Cardiac septum (tissue), 1 donor: ENCODE measurements at regions of chr7 and their contacts with region 1.

Region 1: GRCh38 chr7:130365511-130366441 is 14.5 kb upstream of the CPA1 start:
- DNase-seq: peak; percentile 74

Region 2: DNA sequence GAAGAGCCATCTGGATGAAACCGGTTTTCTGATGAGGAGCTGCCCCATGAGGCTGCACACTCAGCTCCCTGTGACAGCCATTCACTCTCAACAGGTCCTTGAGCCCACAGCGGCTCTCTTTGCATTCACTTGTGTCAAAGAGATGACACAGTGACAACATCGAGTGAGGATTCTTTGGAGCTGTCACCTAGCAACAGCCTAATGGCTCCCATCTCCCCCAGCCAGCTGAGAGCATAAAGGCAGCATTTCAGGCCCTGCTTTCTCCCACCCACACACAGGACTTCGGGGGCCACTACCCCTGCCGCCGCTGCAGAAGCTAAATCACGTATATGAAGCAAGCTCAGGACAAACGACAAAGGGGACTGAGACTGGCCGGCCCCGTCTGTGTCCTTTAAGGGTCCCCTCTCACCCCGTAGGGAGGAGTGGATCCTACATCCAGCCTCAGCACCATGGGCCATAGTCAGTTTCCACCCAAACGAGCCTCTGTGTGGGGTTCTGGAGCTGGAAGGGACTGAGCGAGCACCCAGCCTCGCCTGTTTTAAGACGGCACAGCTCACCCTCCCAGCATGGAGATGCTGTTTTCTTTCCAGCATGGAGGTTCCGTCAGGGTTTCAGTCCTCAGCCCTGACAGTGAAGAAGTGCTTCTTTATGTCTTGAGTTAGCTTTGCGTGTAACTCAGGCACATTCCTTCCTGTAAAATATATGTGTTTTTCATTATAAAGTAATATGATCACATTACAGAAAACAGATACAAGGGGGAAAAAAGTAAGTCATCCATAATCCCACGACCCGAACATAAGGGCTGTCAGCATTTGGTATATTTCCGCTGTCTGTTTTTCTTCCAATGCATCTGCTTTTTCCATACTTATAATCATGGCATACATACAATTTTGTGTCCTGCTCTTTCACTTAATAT is 67.9 kb before region 1 on chr7:
- intact Hi-C with region 1: no loop called
- DNase-seq: no peak

Region 3: GRCh38 chr7:130440527-130441365 is 75.0 kb after region 1 on chr7 and contains the start of gene CEP41:
- intact Hi-C with region 1: loop called (anchors 10 kb)
- DNase-seq: peak; percentile 97
- total RNA-seq, gene CEP41: 4.6 TPM